CD14-positive monocyte (primary cell): ENCODE measurements at regions of chr2 and their contacts with region 1.

Region 1: DNA sequence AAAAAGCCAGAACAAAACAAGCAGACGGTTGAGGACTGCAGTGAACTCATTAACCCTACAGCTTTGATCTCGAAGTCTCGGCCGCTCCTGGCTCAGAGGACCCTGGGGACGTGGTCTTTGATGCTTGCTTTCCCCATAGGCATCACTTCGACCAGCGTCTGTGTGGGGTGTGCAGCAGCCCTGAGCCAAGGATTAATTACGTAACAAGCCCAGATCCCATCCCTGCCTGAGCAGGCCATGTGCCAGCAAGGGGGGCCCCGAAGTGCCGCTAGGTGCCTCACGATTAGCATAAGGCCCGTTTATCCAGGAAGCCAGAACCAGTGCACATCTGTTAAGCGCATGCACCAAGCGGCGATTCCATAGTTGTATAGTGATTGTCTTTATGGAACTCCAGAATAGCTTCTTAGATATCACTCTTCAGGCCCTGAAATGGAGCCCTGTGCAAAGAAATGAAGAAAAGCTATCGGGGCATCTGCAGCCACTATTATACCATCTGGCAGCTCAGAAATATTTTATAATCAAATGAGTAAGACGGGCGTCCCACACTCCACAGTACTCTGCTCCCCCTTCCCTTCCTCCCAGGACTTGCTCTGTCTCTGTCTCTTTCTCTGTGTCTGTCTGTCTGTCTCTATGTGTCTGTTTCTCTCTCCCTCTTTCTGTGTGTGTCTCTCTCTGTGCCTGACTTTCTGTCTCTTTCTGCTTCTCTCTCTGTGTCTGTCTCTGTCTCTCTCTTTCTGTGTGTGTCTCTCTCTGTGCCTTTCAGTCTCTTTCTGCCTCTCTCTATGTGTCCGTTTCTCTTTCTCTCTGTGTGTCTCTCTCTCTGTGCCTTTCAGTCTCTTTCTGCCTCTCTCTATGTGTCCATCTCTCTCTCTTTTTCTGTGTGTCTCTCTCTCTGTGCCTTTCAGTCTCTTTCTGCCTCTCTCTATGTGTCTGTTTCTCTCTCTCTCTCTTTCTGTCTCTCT is 41.7 kb downstream of the HPCAL1 start:
- DNase-seq: no peak
- H3K4me3 ChIP-seq: no peak overlapping the region
- H3K4me3 Mint-ChIP-seq: peak overlapping the region; percentile 3 to 26
- H3K27ac ChIP-seq: peak overlapping the region in 1 of 2 donors; percentile 29
- H3K27ac Mint-ChIP-seq: peak overlapping the region; percentile 29 to 87 (median 76)
- H3K4me1 ChIP-seq: peaks cover 47 to 48% of the 10 kb centered on the region in 2 donors
- H3K4me1 Mint-ChIP-seq: peaks cover 61% of the 10 kb centered on the region
- H3K27me3 ChIP-seq: no peaks in the 10 kb centered on the region
- H3K27me3 Mint-ChIP-seq: peaks cover 0 to 1% (median 0%) of the 10 kb centered on the region in 3 donors
- CTCF ChIP-seq: no peak

Region 2: GRCh38 chr2:10382354-10383061 is 38.1 kb after region 1 on chr2:
- intact Hi-C with region 1: loop called in 1 of 2 experiments (anchors 5 kb)
- DNase-seq: peak; percentile 66 to 77 (median 71)
- H3K4me3 ChIP-seq: peak overlapping the region in 2 of 3 experiments; percentile 9 to 59
- H3K4me3 Mint-ChIP-seq: peak overlapping the region; percentile 65 to 85
- H3K27ac ChIP-seq: peak overlapping the region; percentile 34 to 59
- H3K27ac Mint-ChIP-seq: peak overlapping the region; percentile 58 to 90 (median 82)
- H3K4me1 ChIP-seq: peaks cover 89 to 97% of the 10 kb centered on the region in 2 donors
- H3K4me1 Mint-ChIP-seq: peaks cover 94% of the 10 kb centered on the region
- H3K27me3 ChIP-seq: no peaks in the 10 kb centered on the region
- H3K27me3 Mint-ChIP-seq: peaks cover 0 to 2% (median 2%) of the 10 kb centered on the region in 3 donors
- CTCF ChIP-seq: no peak